Activated CD4-positive, alpha-beta T cell treated with anti-CD3 and anti-CD28 coated beads for 36 hours (primary cell): ENCODE measurements at regions of chr20 and their contacts with region 1.

Region 1: DNA sequence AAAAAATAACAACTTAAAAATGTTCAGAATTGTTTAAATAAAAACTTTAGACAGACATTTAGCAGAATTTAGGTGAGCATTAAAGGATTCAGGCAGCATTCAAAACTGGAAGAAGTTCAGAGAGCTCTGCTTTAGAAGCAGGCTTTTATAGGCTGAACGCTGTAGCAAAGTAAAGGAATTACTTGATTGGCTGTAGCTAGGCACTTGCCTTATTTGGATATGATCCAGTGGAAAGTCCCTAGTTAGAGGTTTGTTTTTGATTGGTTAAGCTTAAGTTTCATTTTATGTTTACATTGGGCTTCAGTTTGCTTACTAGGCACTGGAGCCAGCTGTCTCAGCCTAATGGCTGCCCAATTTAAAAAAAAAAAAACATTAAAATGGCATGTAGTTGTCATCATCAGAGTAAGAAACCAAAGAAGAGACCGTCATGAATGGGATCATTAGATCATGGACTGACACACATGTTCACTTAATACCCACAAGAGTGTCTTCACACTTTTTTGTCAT is 65.1 kb downstream of the CBFA2T2 start:
- DNase-seq: peak; percentile 44
- ATAC-seq: peak; percentile 99
- H3K4me3 Mint-ChIP-seq: no peak overlapping the region
- H3K27ac Mint-ChIP-seq: peak overlapping the region; percentile 77
- H3K4me1 Mint-ChIP-seq: peaks cover 30% of the 10 kb centered on the region
- H3K27me3 Mint-ChIP-seq: no peaks in the 10 kb centered on the region

Region 2: DNA sequence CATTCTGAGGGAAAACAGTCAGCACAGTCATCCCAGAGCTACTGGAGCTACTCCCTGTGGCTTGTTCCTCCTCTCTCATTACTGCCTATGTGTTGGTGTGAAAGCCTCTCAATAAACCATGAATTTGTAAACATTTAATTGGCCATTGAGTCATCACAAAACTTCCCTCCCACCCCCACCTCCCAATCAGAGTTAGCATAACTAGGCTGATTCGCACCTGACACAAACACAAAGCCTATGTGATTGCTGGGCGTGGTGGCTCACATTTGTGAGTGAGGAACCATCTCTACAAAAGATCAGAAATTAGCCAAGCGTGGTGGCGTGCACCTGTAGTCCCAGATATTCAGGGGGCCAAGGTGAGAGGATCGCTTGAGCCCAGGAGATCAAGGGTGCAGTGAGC is 94.3 kb before region 1 on chr20:
- CTCF ChIA-PET with region 1: no interaction called
- POLR2A ChIA-PET with region 1: no interaction called
- intact Hi-C with region 1: loop called in 1 of 2 experiments (anchors 5 kb)
- DNase-seq: peak; percentile 35
- ATAC-seq: peak; percentile 43
- H3K4me3 Mint-ChIP-seq: no peak overlapping the region
- H3K27ac Mint-ChIP-seq: no peak overlapping the region
- H3K4me1 Mint-ChIP-seq: no peaks in the 10 kb centered on the region
- H3K27me3 Mint-ChIP-seq: no peaks in the 10 kb centered on the region

Region 3: GRCh38 chr20:33489495-33490022 is 65.4 kb before region 1 on chr20:
- CTCF ChIA-PET with region 1: interaction called, 4 read pairs
- POLR2A ChIA-PET with region 1: interaction called, 10 read pairs
- intact Hi-C with region 1: loop called in 1 of 2 experiments (anchors 1 kb)
- DNase-seq: peak; percentile 99
- ATAC-seq: peak; percentile 98
- H3K4me3 Mint-ChIP-seq: peak overlapping the region; percentile 85
- H3K27ac Mint-ChIP-seq: peak overlapping the region; percentile 78
- H3K4me1 Mint-ChIP-seq: peaks cover 6% of the 10 kb centered on the region
- H3K27me3 Mint-ChIP-seq: no peaks in the 10 kb centered on the region

Region 4: GRCh38 chr20:33594743-33595142 is 39.8 kb after region 1 on chr20:
- CTCF ChIA-PET with region 1: no interaction called
- POLR2A ChIA-PET with region 1: no interaction called
- intact Hi-C with region 1: loop called in 1 of 2 experiments (anchors 5 kb)
- DNase-seq: no peak
- ATAC-seq: no peak
- H3K4me3 Mint-ChIP-seq: no peak overlapping the region
- H3K27ac Mint-ChIP-seq: no peak overlapping the region
- H3K4me1 Mint-ChIP-seq: peaks cover 4% of the 10 kb centered on the region
- H3K27me3 Mint-ChIP-seq: no peaks in the 10 kb centered on the region

Region 5: DNA sequence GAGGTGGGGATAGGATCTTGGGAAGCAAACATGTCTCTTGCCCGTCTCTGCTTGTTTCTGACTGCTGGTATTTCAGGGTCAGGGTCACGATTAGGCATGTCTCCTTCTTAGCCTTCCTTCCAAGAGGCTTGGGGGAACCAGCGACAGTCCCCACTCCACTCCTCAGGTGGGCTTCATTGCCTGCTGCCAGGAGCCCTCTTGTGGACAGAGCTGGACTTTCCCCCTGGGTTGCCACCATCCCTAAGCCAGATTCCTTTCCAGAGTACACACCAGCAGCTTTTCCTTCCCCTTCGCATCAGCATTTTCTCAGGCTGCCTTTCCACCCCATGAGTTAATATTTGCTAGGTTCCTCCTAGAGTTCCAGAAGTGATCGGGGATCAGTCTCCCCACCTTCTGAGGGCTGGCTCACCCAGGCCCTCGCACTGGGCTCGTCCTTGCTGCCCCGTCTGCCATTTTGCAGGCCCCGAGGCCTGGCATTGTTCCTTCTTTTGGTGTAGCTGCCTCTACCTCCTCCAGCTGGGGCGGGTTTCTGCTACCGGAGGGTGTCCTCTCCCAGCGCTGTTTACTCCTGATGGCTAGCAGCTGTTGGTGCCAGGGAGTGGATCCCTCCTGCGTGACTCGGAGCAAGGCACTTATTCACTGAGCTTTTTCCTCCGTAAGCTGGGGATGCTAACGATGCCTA is 98.4 kb after region 1 on chr20:
- CTCF ChIA-PET with region 1: no interaction called
- POLR2A ChIA-PET with region 1: no interaction called
- intact Hi-C with region 1: loop called in 1 of 2 experiments (anchors 1 kb)
- DNase-seq: peak; percentile 61
- ATAC-seq: peak; percentile 34
- H3K4me3 Mint-ChIP-seq: no peak overlapping the region
- H3K27ac Mint-ChIP-seq: peak overlapping the region; percentile 78
- H3K4me1 Mint-ChIP-seq: peaks cover 41% of the 10 kb centered on the region
- H3K27me3 Mint-ChIP-seq: no peaks in the 10 kb centered on the region

Region 6: GRCh38 chr20:33666293-33667244 is 111.6 kb after region 1 on chr20 and contains the start of gene ACTL10:
- CTCF ChIA-PET with region 1: interaction called, 3 read pairs
- POLR2A ChIA-PET with region 1: no interaction called
- intact Hi-C with region 1: loop called (anchors 1 to 10 kb)
- DNase-seq: peak; percentile 89
- ATAC-seq: peak; percentile 59
- H3K4me3 Mint-ChIP-seq: peak within 1 kb of the TSS; percentile 75
- H3K27ac Mint-ChIP-seq: peak within 1 kb of the TSS; percentile 90
- H3K4me1 Mint-ChIP-seq: peaks cover 31% of the 10 kb centered on the region
- H3K27me3 Mint-ChIP-seq: no peaks in the 10 kb centered on the region
- total RNA-seq, gene ACTL10: 0.91 to 1.7 TPM

Region 7: GRCh38 chr20:33719989-33720709 is 165.2 kb after region 1 on chr20 and contains the start of gene PXMP4:
- CTCF ChIA-PET with region 1: no interaction called
- POLR2A ChIA-PET with region 1: interaction called, 6 read pairs
- intact Hi-C with region 1: loop called in 1 of 2 experiments (anchors 1 kb)
- DNase-seq: peak; percentile 92
- ATAC-seq: peak; percentile 99
- H3K4me3 Mint-ChIP-seq: peak within 1 kb of the TSS; percentile 88
- H3K27ac Mint-ChIP-seq: peak within 1 kb of the TSS; percentile 83
- H3K4me1 Mint-ChIP-seq: peaks cover 18% of the 10 kb centered on the region
- H3K27me3 Mint-ChIP-seq: no peaks in the 10 kb centered on the region
- total RNA-seq, gene PXMP4: 8.8 to 10.2 TPM